RWPE1 (cell line): ENCODE measurements at regions of chr12 and their contacts with region 1.

Region 1: DNA sequence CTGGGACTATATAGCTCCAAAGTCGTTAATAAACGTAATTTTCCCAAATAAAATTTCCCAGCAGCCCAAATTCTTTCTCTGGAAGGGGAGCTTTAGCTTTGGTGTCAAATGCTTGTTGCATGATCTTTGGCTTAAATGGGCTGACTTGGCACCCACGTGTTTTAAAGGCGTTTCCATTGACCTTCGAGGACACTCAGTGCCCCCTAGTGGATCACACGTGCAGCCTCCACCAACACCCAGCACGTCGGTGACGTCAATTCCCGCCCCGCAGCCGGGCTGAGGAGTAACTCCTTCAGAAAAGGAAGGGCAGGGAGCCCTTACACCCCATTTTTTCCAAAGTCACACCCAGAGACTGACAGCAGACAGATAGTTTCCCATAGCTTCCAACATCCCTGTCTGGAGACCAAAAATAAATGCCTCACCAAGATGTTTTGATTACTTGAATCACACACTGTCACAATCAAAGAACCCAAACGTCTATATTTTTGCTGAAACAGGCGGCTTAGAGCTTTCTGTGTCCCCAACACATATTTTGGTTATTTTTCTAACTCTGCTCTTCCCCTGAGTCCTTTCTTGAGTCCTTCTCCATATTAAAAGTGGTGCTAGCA is 707.9 kb downstream of the AACS start:
- DNase-seq: peak; percentile 8
- H3K27ac ChIP-seq: no peak overlapping the region
- CTCF ChIP-seq: peak; percentile 30; the same call in 1 of the 2 replicates

Region 2: GRCh38 chr12:125989696-125990095 is 216.6 kb after region 1 on chr12:
- CTCF ChIA-PET with region 1: no interaction called
- POLR2A ChIA-PET with region 1: no interaction called
- DNase-seq: peak; percentile 55
- H3K27ac ChIP-seq: no peak overlapping the region
- CTCF ChIP-seq: no peak

Region 3: GRCh38 chr12:126114441-126114840 is 341.3 kb after region 1 on chr12:
- CTCF ChIA-PET with region 1: interaction called, 12 read pairs
- POLR2A ChIA-PET with region 1: no interaction called
- DNase-seq: no peak
- H3K27ac ChIP-seq: no peak overlapping the region
- CTCF ChIP-seq: no peak